B cell (primary cell): ENCODE measurements at regions of chr1 and their contacts with region 1.

Region 1: DNA sequence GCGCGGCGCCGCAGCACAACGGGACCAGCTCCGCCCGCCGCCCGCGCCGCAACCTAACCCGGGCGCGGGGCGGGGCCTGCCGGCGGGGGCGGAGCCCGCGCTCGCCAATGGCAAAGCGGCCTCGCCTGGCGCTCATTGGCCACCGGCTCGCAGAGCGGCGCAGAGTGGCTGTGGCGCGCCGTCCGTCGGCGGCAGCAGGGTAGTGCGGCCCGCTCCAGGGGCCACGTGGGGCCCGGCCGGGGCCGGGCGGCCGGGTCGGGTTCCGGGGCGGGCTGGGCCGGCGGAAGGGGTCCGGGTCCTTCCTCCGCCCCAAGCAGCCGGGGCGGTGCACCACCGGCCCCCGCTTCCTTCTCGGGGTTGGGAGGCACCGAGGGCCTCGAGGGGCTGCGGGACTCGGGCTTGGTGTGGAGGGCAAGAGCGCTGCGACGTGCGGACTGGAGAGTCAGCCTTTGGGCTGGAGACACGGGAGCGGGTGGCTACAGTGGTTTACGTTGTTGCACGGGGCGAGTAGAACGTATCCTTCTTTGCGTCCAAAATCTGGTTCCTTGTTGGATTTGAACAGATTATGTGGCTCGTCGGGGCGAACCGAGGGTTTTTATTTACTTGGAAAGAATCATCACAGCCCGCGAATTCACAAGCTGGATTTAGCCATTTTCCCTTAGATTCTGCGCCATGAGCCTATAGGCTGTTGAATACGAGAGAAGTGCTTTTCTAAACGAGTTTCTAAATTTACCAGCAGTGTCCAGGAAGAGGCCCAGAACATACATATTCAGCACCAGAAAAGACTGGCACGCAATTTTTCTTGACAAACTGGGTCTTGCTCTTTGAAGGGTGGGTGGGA is at the start of gene SRM:
- DNase-seq: peak; percentile 93
- ATAC-seq: peak; percentile 98
- H3K4me3 ChIP-seq: peak within 1 kb of the TSS; percentile 73 to 93 (median 79)
- H3K4me3 Mint-ChIP-seq: peak within 1 kb of the TSS; percentile 98
- H3K27ac ChIP-seq: peak within 1 kb of the TSS; percentile 43 to 65
- H3K27ac Mint-ChIP-seq: peak within 1 kb of the TSS; percentile 92
- H3K4me1 ChIP-seq: peaks cover 16 to 19% of the 10 kb centered on the region in 2 donors
- H3K4me1 Mint-ChIP-seq: peaks cover 25% of the 10 kb centered on the region
- H3K27me3 ChIP-seq: no peaks in the 10 kb centered on the region
- H3K27me3 Mint-ChIP-seq: no peaks in the 10 kb centered on the region
- CTCF ChIP-seq: peak; percentile 37
- total RNA-seq, gene SRM: 38.9 and 39.4 TPM in 2 replicates

Region 2: DNA sequence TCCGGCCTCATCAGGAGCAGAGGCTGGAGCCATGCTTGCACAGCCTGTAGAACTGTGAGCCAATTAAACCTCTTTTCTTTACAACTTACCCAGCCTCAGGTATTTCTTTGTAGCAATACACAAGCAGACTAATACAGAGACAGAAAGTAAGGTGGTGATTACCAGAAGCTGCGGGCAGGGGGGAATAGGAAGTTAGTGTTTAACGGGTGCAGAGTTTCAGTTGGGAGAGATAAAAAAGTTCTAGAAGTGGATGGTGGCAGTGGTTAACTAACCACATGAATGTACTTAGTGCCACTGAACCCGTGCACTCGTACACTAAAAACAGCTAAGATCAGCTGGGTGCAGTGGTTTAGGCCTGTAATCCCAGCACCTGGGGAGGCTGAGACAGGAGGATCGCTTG is 128.1 kb before region 1 on chr1:
- CTCF ChIA-PET with region 1: no interaction called
- POLR2A ChIA-PET with region 1: no interaction called
- intact Hi-C with region 1: no loop called
- DNase-seq: no peak
- ATAC-seq: no peak
- H3K4me3 ChIP-seq: no peak overlapping the region
- H3K4me3 Mint-ChIP-seq: no peak overlapping the region
- H3K27ac ChIP-seq: no peak overlapping the region
- H3K27ac Mint-ChIP-seq: no peak overlapping the region
- H3K4me1 ChIP-seq: no peaks in the 10 kb centered on the region
- H3K4me1 Mint-ChIP-seq: no peaks in the 10 kb centered on the region
- H3K27me3 ChIP-seq: no peaks in the 10 kb centered on the region
- H3K27me3 Mint-ChIP-seq: peaks cover 1% of the 10 kb centered on the region
- CTCF ChIP-seq: no peak

Region 3: GRCh38 chr1:11012250-11013171 is 47.7 kb before region 1 on chr1 and contains the start of gene TARDBP:
- CTCF ChIA-PET with region 1: no interaction called
- POLR2A ChIA-PET with region 1: no interaction called
- intact Hi-C with region 1: loop called (anchors 1 kb)
- DNase-seq: peak; percentile 98
- ATAC-seq: peak; percentile 88
- H3K4me3 ChIP-seq: peak within 1 kb of the TSS; percentile 81 to 97 (median 95)
- H3K4me3 Mint-ChIP-seq: peak within 1 kb of the TSS; percentile 86
- H3K27ac ChIP-seq: peak within 1 kb of the TSS; percentile 98 to 99
- H3K27ac Mint-ChIP-seq: peak within 1 kb of the TSS; percentile 99
- H3K4me1 ChIP-seq: peaks cover 15 to 26% of the 10 kb centered on the region in 2 donors
- H3K4me1 Mint-ChIP-seq: peaks cover 29% of the 10 kb centered on the region
- H3K27me3 ChIP-seq: no peaks in the 10 kb centered on the region
- H3K27me3 Mint-ChIP-seq: no peaks in the 10 kb centered on the region
- CTCF ChIP-seq: no peak
- total RNA-seq, gene TARDBP: 222 and 226 TPM in 2 replicates

Region 4: DNA sequence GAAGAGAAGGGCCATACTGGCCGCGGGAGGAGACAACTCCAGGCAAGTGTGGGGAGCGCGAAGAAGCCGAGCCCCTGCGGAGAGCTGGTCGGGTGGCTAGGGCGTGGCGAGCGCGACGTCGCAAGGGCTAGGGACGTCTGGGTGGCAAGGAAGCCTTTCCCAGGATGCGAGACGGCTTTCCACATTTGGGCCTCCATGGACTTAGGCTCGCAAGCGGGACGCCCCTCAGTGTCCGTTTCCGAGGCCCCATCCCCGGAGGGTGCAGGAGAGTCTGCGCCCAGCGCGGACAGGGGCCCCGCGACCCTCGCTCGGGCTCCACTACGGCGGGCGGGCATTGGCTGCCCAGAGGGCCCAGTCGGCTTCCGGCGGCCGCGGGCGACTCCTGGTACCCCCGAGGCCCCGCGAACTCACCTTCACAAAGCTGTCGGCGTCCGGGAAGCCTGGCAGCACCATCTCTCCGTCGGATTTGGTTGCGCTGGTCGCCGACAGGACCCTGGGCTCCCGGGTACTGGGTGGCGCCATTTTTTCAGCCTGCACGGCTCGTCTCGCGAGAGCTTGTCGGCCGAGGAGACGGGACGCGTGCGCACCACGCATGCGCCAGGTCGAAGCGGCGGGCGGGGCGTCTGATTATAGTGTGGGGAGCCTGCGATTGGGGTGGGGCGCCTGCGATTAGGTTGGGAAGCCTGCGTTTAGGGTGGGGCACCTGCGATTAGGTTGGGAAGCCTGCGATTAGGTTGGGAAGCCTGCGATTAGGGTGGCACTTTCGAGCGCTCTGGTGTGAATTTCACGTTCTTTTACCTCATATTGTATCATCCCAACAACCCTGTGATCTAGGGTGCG is 39.3 kb after region 1 on chr1 and contains the start of gene EXOSC10:
- CTCF ChIA-PET with region 1: interaction called, 5 read pairs
- POLR2A ChIA-PET with region 1: interaction called, 8 read pairs
- intact Hi-C with region 1: loop called (anchors 1 kb)
- DNase-seq: peak; percentile 94
- ATAC-seq: peak; percentile 98
- H3K4me3 ChIP-seq: peak within 1 kb of the TSS; percentile 56 to 96 (median 83)
- H3K4me3 Mint-ChIP-seq: peak within 1 kb of the TSS; percentile 96
- H3K27ac ChIP-seq: peak within 1 kb of the TSS; percentile 48 to 90
- H3K27ac Mint-ChIP-seq: peak within 1 kb of the TSS; percentile 98
- H3K4me1 ChIP-seq: peaks cover 11 to 15% of the 10 kb centered on the region in 2 donors
- H3K4me1 Mint-ChIP-seq: peaks cover 18% of the 10 kb centered on the region
- H3K27me3 ChIP-seq: no peaks in the 10 kb centered on the region
- H3K27me3 Mint-ChIP-seq: no peaks in the 10 kb centered on the region
- CTCF ChIP-seq: no peak
- total RNA-seq, gene EXOSC10: 118 and 119 TPM in 2 replicates

Region 5: GRCh38 chr1:11272832-11273594 is 212.8 kb after region 1 on chr1 and contains the start of gene UBIAD1:
- CTCF ChIA-PET with region 1: no interaction called
- POLR2A ChIA-PET with region 1: no interaction called
- intact Hi-C with region 1: loop called (anchors 1 kb)
- DNase-seq: peak; percentile 91
- ATAC-seq: peak; percentile 87
- H3K4me3 ChIP-seq: peak within 1 kb of the TSS; percentile 51 to 96 (median 95)
- H3K4me3 Mint-ChIP-seq: peak within 1 kb of the TSS; percentile 87
- H3K27ac ChIP-seq: peak within 1 kb of the TSS; percentile 77 to 96
- H3K27ac Mint-ChIP-seq: peak within 1 kb of the TSS; percentile 96
- H3K4me1 ChIP-seq: peaks cover 17 to 34% of the 10 kb centered on the region in 2 donors
- H3K4me1 Mint-ChIP-seq: peaks cover 30% of the 10 kb centered on the region
- H3K27me3 ChIP-seq: no peaks in the 10 kb centered on the region
- H3K27me3 Mint-ChIP-seq: no peaks in the 10 kb centered on the region
- CTCF ChIP-seq: no peak
- total RNA-seq, gene UBIAD1: 28.1 and 30.9 TPM in 2 replicates

Region 6: DNA sequence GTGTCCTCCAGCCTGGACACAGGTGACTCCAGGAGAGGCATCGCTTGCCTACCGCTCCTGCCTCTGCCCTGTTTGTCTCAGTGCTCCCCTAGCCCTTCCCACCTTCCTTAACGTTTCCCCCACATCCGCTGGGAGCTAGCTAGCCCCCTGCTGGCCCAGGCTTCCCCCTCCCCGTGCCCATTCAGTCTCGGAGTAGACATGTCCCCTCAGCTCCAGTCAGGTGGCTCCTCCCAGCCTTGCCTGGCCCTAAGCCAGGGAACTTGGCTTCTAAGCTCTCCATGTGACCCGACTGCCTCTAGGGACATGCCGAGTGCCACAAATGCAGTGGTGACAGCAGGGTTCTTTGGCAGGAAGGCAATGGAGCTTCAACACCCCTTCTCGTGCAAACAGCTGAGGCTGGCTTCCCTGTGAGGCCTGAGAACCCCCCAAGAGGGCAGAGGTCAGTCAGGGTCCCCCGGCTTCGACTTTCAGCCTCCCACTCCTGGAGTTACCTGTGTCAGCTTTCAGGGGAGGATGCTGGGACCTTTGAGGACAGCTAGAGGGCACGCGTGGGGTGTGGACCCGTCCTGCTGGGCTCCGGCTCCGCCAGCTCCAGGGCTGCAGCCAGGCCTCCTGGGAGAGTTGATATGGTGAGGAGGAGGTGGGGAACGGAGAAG is 647.5 kb after region 1 on chr1:
- CTCF ChIA-PET with region 1: no interaction called
- POLR2A ChIA-PET with region 1: no interaction called
- intact Hi-C with region 1: no loop called
- DNase-seq: no peak
- ATAC-seq: no peak
- H3K4me3 ChIP-seq: no peak overlapping the region
- H3K4me3 Mint-ChIP-seq: no peak overlapping the region
- H3K27ac ChIP-seq: no peak overlapping the region
- H3K27ac Mint-ChIP-seq: no peak overlapping the region
- H3K4me1 ChIP-seq: no peaks in the 10 kb centered on the region
- H3K4me1 Mint-ChIP-seq: no peaks in the 10 kb centered on the region
- H3K27me3 ChIP-seq: peaks cover 0 to 12% (median 0%) of the 10 kb centered on the region in 4 experiments
- H3K27me3 Mint-ChIP-seq: peaks cover 13% of the 10 kb centered on the region
- CTCF ChIP-seq: no peak